MCF 10A (cell line): ENCODE measurements at regions of chr3 and their contacts with region 1.

Region 1: DNA sequence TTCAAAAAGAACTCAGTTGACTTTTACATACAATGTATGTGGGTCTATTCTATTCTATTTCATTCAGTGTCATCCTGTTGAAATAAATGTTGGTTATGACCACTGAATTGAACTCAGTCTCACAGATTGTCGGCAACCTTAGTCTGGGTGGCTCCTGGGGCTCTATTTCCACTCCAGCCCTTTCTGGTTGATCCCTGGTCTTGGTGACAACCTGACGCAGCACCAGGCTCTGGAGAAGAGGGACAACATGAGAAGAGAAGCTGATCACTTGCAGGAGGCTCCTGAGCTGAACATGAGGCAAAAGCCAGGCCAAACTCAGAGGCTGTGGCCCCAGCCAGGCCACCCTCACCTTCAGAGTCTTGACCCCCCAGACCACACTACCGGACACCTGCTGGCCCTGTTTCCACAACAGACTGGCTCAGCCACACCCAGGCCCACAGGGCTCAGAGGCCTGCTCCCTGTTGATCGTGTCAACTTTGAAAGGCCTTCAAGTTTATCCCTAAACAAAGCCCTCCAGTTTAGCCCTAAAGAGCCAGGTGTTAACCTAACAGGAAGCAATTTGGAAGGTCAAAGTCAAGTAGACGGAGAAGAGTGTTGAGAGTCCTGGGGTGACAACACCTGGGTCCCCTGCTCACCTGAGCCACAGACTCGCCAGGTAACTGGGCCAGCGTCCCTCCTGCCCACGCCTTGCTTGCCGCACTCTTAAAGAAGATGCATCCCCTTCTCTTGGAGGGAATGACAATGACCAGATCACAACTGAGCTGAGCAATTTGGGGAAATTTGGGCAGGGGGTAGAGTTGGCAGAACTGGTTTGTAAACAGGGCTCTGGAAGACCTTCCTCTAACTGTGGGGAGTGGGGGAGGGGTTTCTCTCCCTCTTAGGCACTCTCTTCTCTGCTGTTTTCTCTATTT is 15.4 kb upstream of the MUC20 start:
- DNase-seq: no peak
- H3K4me3 Mint-ChIP-seq: no peak overlapping the region
- H3K27ac Mint-ChIP-seq: no peak overlapping the region
- H3K4me1 Mint-ChIP-seq: no peaks in the 10 kb centered on the region
- H3K27me3 Mint-ChIP-seq: no peaks in the 10 kb centered on the region
- CTCF ChIP-seq: no peak

Region 2: DNA sequence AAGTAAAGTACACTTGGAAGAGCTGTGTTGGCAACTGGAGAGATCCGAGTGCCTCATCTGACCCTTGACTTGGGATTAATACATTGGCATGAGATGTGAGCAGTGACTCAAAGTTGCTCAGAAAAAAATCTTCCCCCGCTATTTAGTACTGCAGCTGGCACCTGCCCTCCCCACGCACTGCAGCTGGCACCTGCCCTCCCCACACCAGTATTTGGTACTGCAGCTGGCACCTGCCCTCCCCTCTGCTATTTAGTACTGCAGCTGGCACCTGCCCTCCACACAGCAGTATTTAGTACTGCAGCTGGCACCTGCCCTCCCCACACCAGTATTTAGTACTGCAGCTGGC is 11.5 kb after region 1 on chr3:
- CTCF ChIA-PET with region 1: interaction called, 3 read pairs
- POLR2A ChIA-PET with region 1: interaction called, 24 read pairs
- intact Hi-C with region 1: no loop called
- DNase-seq: peak; percentile 75
- H3K4me3 Mint-ChIP-seq: no peak overlapping the region
- H3K27ac Mint-ChIP-seq: no peak overlapping the region
- H3K4me1 Mint-ChIP-seq: peaks cover 13% of the 10 kb centered on the region
- H3K27me3 Mint-ChIP-seq: peaks cover 61% of the 10 kb centered on the region
- CTCF ChIP-seq: no peak

Region 3: GRCh38 chr3:196044513-196044912 is 339.2 kb after region 1 on chr3:
- CTCF ChIA-PET with region 1: no interaction called
- POLR2A ChIA-PET with region 1: no interaction called
- intact Hi-C with region 1: no loop called
- DNase-seq: no peak
- H3K4me3 Mint-ChIP-seq: no peak overlapping the region
- H3K27ac Mint-ChIP-seq: no peak overlapping the region
- H3K4me1 Mint-ChIP-seq: no peaks in the 10 kb centered on the region
- H3K27me3 Mint-ChIP-seq: no peaks in the 10 kb centered on the region
- CTCF ChIP-seq: no peak

Region 4: GRCh38 chr3:196055683-196056270 is 350.4 kb after region 1 on chr3:
- CTCF ChIA-PET with region 1: no interaction called
- POLR2A ChIA-PET with region 1: no interaction called
- intact Hi-C with region 1: no loop called
- DNase-seq: peak; percentile 30
- H3K4me3 Mint-ChIP-seq: no peak overlapping the region
- H3K27ac Mint-ChIP-seq: no peak overlapping the region
- H3K4me1 Mint-ChIP-seq: no peaks in the 10 kb centered on the region
- H3K27me3 Mint-ChIP-seq: no peaks in the 10 kb centered on the region
- CTCF ChIP-seq: no peak